Vagina (tissue), 2 donors: ENCODE measurements at regions of chr2 and their contacts with region 1.

Region 1: DNA sequence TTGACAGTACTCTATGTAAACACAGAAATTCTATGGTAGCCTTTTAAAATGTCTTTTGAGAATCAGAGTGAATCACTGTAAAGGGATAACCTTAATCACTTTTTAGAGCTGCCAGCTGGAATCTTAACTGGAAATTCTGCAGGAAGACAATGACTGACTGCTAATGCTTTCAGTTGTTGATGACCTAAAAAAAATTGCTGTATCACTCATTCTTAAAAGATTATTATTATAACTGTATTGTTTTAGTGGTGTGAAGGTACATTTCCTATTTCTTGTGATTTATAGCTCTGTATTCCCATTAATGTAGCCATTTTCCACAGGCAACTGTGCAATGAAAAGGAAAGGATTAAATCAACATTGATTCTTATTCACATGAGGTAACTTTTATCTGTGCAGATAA is 260.5 kb downstream of the CALCRL start:
- DNase-seq: no peak
- H3K4me3 ChIP-seq: no peak overlapping the region
- H3K27ac ChIP-seq: no peak overlapping the region
- H3K4me1 ChIP-seq: no peaks in the 10 kb centered on the region
- H3K27me3 ChIP-seq: no peaks in the 10 kb centered on the region
- CTCF ChIP-seq: no peak
- POLR2A ChIP-seq: no peak

Region 2: DNA sequence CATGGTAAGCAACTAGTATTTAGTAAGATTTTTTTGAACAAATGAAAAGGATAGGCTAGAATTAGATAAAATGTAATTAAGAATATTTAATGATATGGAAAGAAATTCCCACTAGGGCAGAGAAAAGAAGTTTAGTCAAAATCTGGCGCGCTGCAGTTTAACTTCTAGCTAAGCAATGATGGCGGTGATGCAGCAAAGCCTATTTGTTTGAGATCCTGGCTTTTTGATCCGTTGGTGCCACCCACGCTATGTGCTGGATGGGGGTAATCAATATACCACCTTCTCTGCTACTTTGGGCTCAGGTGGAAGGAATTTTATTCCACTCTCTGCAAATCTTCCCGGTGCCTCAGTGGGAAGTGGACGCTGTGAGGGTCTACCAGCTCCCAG is 494.1 kb before region 1 on chr2:
- intact Hi-C with region 1: loop called (anchors 5 kb)
- DNase-seq: no peak
- H3K4me3 ChIP-seq: peak overlapping the region; percentile 68 to 71
- H3K27ac ChIP-seq: peak overlapping the region; percentile 83
- H3K4me1 ChIP-seq: peaks cover 18% of the 10 kb centered on the region
- H3K27me3 ChIP-seq: no peaks in the 10 kb centered on the region
- CTCF ChIP-seq: no peak
- POLR2A ChIP-seq: no peak

Region 3: GRCh38 chr2:186751790-186752189 is 435.7 kb before region 1 on chr2:
- intact Hi-C with region 1: no loop called
- DNase-seq: no peak
- H3K4me3 ChIP-seq: no peak overlapping the region
- H3K27ac ChIP-seq: no peak overlapping the region
- H3K4me1 ChIP-seq: no peaks in the 10 kb centered on the region
- H3K27me3 ChIP-seq: no peaks in the 10 kb centered on the region
- CTCF ChIP-seq: no peak
- POLR2A ChIP-seq: no peak

Region 4: GRCh38 chr2:187148059-187148714 is 39.3 kb before region 1 on chr2:
- intact Hi-C with region 1: no loop called
- DNase-seq: no peak
- H3K4me3 ChIP-seq: no peak overlapping the region
- H3K27ac ChIP-seq: no peak overlapping the region
- H3K4me1 ChIP-seq: no peaks in the 10 kb centered on the region
- H3K27me3 ChIP-seq: no peaks in the 10 kb centered on the region
- CTCF ChIP-seq: no peak
- POLR2A ChIP-seq: no peak